ENCODE measurements at regions of chr7 and their contacts with region 1.

Region 1: GRCh38 chr7:78769481-78770101 is 683.9 kb downstream of the MAGI2 start:
- DNase-seq: no peak
- H3K4me3 ChIP-seq: peak overlapping the region; percentile 43 to 60
- H3K27ac ChIP-seq: no peak overlapping the region
- H3K4me1 ChIP-seq: peaks cover 0 to 11% of the 10 kb centered on the region in 2 donors
- H3K27me3 ChIP-seq: no peaks in the 10 kb centered on the region
- CTCF ChIP-seq: no peak

Region 2: GRCh38 chr7:78510580-78511188 is 258.9 kb before region 1 on chr7:
- intact Hi-C with region 1: loop called (anchors 10 kb)
- DNase-seq: no peak
- H3K4me3 ChIP-seq: no peak overlapping the region
- H3K27ac ChIP-seq: no peak overlapping the region
- H3K4me1 ChIP-seq: no peaks in the 10 kb centered on the region
- H3K27me3 ChIP-seq: no peaks in the 10 kb centered on the region
- CTCF ChIP-seq: peak; percentile 34 to 55 (median 52)

Region 3: DNA sequence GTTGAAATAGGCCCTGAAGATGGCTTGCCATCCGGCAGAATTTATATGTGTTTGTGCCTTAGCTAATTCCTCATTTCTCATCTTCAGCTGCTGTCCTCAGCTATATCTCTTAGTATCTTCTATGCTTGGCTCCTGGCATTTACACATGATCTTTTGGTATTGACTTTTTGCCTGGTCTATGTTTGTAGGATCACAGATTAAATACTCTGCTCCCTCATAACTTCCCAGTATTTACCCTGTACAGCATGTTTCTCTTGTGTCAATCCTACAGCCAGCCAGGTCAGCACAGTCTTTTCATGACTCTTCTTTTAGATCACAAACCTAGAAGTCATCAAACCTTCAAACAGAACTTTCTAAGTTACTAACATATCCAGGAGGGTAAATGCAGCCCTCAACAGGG is 59.9 kb before region 1 on chr7:
- intact Hi-C with region 1: loop called (anchors 5 kb)
- DNase-seq: no peak
- H3K4me3 ChIP-seq: no peak overlapping the region
- H3K27ac ChIP-seq: no peak overlapping the region
- H3K4me1 ChIP-seq: peaks cover 0 to 6% of the 10 kb centered on the region in 2 donors
- H3K27me3 ChIP-seq: no peaks in the 10 kb centered on the region
- CTCF ChIP-seq: no peak

Measured in ascending aorta (tissue), 2 donors.